Cardiac septum (tissue), 1 donor: ENCODE measurements at regions of chr11 and their contacts with region 1.

Region 1: GRCh38 chr11:27241311-27242122 is 121.5 kb downstream of the CCDC34 start:
- DNase-seq: no peak

Region 2: GRCh38 chr11:27183672-27184457 is 57.7 kb before region 1 on chr11:
- intact Hi-C with region 1: no loop called
- DNase-seq: no peak

Region 3: DNA sequence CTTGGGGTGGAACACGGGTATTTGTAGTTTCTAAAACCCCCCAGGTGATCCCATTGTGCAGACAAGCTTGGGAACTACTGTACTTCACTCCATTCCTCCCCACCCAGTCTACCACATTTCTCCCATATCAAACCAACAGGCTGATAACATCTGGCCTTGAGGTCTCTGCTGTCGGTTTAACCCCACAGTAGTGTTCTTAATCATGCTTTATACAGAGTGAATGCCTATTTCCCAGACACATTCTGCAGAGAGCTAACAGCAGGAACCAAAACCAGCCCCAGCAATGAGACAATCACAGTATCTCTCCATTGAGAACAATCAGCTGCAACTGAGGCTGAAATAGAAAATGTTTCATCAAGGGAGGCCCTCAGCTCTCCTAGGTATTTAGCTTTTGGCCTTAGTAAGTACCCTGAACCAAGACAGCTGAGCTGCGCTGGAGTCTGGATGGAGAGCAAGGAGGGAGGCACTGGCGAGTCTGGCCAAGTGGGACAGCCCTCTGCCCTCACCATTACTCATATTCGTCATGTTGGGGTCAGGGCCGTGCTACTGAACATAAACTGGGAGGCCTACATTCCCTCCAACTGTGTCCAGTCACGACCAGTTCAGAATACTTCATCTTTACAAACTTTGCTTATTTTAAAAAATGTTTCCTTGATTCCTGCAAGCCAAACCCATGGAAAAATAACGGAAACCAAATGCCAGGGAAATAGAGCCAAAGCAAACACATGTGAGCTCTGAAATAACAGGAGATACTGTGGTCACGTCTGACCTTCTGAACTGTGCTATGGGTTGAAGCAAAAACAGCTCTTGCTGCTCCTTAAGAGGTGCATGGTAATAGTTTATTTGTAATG is 40.4 kb after region 1 on chr11:
- intact Hi-C with region 1: loop called (anchors 5 kb)
- DNase-seq: no peak

Region 4: DNA sequence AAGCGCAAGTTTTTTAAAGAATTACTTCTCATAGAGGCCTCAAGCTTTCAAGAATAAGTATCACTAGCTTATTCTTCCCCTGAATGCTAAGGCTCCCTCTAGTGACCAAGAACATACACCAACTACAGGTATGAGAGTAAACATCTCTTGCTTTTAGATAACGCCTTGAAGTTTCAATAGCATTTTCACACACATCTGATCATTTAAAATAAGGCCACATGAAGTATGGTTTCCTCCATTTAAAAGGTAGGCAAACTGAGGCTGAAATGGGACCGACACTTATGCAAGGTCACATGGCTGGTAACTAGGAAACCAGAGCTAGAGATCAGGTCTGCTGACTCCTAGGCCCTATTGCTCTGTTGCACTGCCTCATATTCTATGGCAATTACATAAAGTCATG is 55.0 kb after region 1 on chr11:
- intact Hi-C with region 1: loop called (anchors 5 kb)
- DNase-seq: no peak